ENCODE measurements at regions of chr5 and their contacts with region 1.

Region 1: DNA sequence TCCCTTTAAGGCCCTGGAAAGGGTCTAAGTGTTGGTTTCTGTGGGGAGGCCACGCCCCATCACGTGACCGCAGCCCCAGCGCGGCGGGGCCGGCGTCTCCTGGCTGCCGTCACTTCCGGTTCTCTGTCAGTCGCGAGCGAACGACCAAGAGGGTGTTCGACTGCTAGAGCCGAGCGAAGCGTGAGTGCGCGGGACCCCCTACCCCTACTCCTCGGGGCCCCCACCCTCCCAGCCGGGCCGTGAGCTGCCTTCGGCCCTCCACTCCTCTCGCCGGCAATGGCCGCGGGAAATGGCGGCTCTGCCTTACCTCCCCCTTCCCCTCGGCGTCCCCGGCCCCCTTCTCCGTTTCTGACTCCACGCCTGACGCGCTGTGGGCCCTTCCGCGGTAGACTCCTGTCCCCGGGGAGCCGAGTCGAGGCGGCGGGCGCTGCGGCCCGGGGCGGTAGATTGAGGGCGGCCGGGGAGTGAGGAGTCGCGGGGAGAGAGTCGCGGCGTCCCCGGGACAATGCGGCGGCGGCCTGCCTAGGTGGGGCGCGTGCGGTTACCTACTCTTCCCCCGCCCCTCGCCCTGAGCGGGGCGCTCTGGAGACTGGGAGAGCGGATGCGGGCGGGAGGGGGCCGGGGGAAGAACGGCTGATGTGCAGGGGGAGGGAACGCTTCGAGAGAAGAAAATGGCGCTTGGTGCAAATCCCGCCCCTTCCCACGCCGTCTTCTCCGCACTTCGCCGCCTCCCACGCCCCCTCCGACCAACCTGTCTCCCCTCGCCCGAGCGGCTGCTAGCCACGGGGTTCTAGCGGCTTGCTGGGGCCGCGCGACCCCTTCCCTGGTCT is at the start of gene SUB1:
- DNase-seq: peak; percentile 95
- H3K4me3 Mint-ChIP-seq: peak within 1 kb of the TSS; percentile 93
- H3K27ac Mint-ChIP-seq: peak within 1 kb of the TSS; percentile 99
- H3K4me1 Mint-ChIP-seq: peaks cover 71% of the 10 kb centered on the region
- H3K27me3 Mint-ChIP-seq: no peaks in the 10 kb centered on the region
- total RNA-seq, gene SUB1: 430 to 446 TPM

Region 2: DNA sequence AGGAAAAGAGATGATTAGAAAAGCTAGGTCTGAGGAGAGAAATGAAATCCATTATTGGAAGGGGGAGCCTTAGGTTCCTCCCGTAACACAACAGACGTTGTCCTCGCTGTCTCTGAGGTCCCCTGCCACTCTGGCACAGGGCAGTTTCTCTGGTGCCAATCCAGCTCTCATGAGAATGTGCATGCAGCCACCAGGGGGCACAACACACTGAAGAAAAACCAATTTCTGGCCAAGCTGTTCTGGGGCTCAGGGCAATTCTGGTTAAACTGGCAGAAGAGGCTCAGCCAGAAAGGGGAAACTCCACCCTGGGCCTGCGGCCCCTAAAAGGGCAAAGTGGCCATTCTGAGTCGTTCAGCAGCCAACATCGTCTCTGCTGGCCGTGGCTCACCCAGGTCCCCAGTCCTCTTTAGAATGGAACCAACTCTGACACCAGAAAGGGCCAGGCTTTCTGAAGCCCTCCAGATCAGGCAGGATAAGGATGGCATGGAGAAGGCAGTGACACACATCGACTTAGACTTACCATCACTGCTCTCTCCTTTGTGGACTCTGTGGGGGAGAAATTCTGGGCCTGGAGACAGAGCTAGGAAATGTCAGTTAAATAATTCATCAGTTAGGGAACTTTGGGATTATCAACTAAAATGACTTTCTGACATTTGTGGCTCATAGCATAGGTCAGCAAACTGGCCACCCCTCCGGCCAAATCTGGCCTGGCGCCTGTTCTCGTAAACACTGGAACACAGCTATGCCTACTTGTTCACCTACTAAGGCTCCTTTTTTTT is 353.0 kb before region 1 on chr5:
- CTCF ChIA-PET with region 1: interaction called, 13 read pairs
- POLR2A ChIA-PET with region 1: no interaction called
- DNase-seq: peak; percentile 80
- H3K4me3 Mint-ChIP-seq: no peak overlapping the region
- H3K27ac Mint-ChIP-seq: no peak overlapping the region
- H3K4me1 Mint-ChIP-seq: peaks cover 6% of the 10 kb centered on the region
- H3K27me3 Mint-ChIP-seq: no peaks in the 10 kb centered on the region

Region 3: GRCh38 chr5:32489791-32490582 is 95.7 kb before region 1 on chr5:
- CTCF ChIA-PET with region 1: interaction called, 51 read pairs
- POLR2A ChIA-PET with region 1: interaction called, 6 read pairs
- DNase-seq: peak; percentile 78
- H3K4me3 Mint-ChIP-seq: no peak overlapping the region
- H3K27ac Mint-ChIP-seq: no peak overlapping the region
- H3K4me1 Mint-ChIP-seq: peaks cover 2% of the 10 kb centered on the region
- H3K27me3 Mint-ChIP-seq: no peaks in the 10 kb centered on the region

Region 4: DNA sequence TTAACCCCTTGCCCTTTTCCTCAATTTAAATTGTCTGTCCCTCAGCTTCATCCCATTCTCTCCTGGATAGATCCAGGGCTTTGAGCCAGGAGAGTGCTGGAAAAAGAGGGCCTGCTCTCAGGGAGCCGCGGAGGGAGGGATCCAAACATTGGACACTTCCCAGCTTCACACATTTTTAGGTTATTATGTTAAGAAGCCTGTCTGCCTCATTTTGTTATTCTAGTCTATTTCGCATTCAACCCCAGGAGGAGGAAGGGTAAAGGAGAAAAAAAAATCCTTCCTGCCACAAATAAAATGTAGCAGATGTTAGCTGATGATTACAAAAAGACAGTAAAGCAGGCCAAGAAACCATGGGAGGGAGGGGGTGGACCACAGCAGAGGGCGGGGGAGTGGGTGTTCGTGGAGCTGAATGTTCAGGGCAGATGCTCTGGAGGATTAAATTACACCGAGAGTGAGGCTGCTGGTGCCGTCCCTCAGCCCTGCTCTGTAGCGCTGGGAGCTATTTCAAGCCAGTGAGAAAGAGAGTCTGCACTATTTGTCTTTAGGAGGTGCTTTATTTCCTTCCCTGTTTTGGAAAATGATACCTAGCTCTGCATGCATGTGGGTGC is 80.6 kb before region 1 on chr5:
- CTCF ChIA-PET with region 1: no interaction called
- POLR2A ChIA-PET with region 1: interaction called, 11 read pairs
- DNase-seq: no peak
- H3K4me3 Mint-ChIP-seq: no peak overlapping the region
- H3K27ac Mint-ChIP-seq: no peak overlapping the region
- H3K4me1 Mint-ChIP-seq: peaks cover 8% of the 10 kb centered on the region
- H3K27me3 Mint-ChIP-seq: peaks cover 13% of the 10 kb centered on the region

Region 5: DNA sequence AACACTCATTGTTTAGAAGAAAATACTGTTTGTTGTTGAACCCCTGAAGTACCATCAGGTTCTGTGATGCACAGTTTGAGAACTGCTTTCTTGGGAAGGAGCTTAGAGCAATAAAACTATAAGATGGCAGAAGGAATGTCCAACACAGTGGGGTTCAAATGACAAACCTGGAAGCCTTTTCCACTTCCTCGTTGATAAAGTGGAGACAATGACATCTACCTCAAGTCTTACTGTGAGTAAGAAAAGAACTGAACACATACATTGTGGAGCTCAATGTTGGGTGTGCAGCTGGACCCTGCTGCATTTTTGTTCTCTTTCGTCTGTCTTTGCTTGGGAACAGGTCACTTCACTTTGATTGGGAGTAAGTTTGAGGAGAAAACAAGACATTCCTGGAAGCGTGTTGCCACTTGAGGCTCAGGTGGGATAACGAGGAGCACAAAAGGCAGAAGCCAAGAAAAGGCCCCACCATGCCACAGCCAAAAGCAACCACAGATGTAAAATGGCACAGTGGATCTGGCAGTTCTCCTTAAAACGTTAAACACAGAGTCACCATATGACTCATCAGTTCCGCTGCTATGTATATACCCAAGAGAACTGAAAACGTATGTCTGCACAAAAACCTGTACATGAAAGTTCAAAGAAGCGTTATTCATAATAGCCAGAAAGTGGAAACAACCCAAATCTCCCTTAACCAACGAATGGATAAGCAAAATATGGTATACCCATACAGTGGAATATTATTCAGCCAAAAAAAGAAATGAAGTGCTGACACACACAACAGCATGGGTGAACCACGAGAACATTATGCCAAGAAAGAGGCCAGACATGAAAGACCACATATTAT is 43.2 kb before region 1 on chr5:
- CTCF ChIA-PET with region 1: interaction called, 13 read pairs
- POLR2A ChIA-PET with region 1: interaction called, 4 read pairs
- DNase-seq: peak; percentile 56
- H3K4me3 Mint-ChIP-seq: peak overlapping the region; percentile 23
- H3K27ac Mint-ChIP-seq: peak overlapping the region; percentile 88
- H3K4me1 Mint-ChIP-seq: peaks cover 48% of the 10 kb centered on the region
- H3K27me3 Mint-ChIP-seq: no peaks in the 10 kb centered on the region

Region 6: DNA sequence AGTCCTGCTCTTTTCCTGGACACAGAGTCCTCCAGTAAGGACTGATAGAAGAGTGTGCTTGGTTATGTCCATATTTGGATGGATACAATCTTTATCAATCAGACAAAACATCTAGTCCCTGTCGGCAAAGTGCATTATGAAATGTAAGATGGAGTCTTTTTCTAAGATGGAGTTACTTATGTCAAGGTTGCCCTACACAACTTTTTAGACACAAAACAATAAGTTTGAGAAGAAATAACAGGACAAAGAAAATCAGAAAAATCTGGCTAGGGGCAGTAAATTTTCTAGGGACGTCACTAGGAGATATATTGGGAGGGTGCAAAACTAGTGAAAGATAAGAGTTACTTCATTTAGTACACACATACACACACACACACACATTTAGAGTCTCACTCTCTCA is 23.6 kb before region 1 on chr5:
- CTCF ChIA-PET with region 1: no interaction called
- POLR2A ChIA-PET with region 1: no interaction called
- DNase-seq: no peak
- H3K4me3 Mint-ChIP-seq: no peak overlapping the region
- H3K27ac Mint-ChIP-seq: no peak overlapping the region
- H3K4me1 Mint-ChIP-seq: peaks cover 6% of the 10 kb centered on the region
- H3K27me3 Mint-ChIP-seq: no peaks in the 10 kb centered on the region